GM18951 (cell line): ENCODE measurements at regions of chr6 and their contacts with region 1.

Region 1: DNA sequence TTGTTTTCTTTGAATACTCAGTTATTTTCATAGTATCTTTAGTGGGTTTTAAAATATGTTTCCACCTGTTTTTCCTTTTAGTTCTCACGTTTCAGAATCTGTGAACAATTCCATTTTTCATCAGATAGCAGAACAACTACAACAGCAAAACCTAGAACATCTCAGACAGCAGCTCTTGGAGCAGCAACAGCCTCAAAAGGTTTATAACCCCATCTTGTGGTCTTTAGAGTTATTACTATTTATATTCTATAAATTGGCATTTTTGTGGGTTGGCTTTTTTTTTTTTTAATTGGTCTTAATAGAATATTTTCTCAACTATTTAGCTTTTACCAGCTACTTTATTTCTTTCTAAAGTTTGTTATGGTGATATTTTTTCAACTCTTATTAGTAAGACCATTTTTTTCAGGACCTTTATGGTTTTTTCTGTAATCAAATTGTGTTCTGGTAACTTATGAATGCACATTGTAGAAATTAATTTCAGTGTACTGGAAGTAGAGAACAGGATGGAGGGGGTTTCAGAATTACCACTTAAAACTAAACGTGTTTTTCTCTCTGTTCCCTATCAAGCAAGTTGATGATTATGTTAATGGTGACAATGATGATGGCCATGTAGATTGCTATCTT is 72.2 kb downstream of the SCAF8 start:
- POLR2A ChIP-seq: no peak

Region 2: GRCh38 chr6:154675602-154676088 is 129.8 kb before region 1 on chr6:
- in situ Hi-C with region 1: loop called (anchors 10 kb)
- POLR2A ChIP-seq: no peak